ENCODE measurements at regions of chr6 and their contacts with region 1.

Region 1: GRCh38 chr6:34994693-34995092 is 105.6 kb downstream of the ANKS1A start:
- DNase-seq: no peak
- ATAC-seq: no peak
- H3K4me3 ChIP-seq: no peak overlapping the region
- H3K27ac ChIP-seq: no peak overlapping the region
- H3K4me1 ChIP-seq: no peaks in the 10 kb centered on the region
- H3K27me3 ChIP-seq: no peaks in the 10 kb centered on the region
- CTCF ChIP-seq: no peak
- POLR2A ChIP-seq: no peak

Region 2: GRCh38 chr6:34876472-34876871 is 118.2 kb before region 1 on chr6:
- intact Hi-C with region 1: no loop called
- DNase-seq: no peak
- ATAC-seq: no peak
- H3K4me3 ChIP-seq: no peak overlapping the region
- H3K27ac ChIP-seq: no peak overlapping the region
- H3K4me1 ChIP-seq: no peaks in the 10 kb centered on the region
- H3K27me3 ChIP-seq: no peaks in the 10 kb centered on the region
- CTCF ChIP-seq: no peak
- POLR2A ChIP-seq: no peak

Region 3: DNA sequence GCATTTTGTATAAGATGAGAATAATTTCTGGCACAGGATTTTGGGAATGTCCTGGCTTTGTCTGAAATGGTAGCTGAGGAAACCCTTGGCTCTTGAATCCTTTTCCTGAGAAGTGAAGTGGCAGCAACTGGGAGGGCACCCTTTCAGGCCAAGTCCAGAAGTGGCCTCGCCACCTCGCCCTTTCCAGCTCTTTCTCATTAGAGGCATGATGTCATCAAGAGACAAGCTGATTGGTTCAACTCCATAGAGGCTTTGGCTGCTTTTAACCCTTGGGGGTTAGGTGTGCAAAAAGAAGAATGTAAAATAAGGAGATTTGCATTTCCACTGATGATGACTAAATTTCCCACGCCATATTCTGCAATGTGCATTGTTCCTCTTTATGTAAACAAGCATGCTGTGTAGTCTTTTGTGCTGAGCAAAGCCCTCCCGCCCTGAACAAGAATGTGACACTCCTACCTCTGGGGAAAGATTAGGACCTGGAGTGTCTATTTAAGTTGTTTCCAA is 29.9 kb after region 1 on chr6:
- intact Hi-C with region 1: no loop called
- DNase-seq: peak in 4 of 5 donors; percentile 66 to 79 (median 72)
- ATAC-seq: peak; percentile 85 to 91 (median 89)
- H3K4me3 ChIP-seq: peak overlapping the region in 4 of 12 donors; percentile 8 to 17 (median 9)
- H3K27ac ChIP-seq: peak overlapping the region; percentile 28 to 95 (median 78)
- H3K4me1 ChIP-seq: peaks cover 21 to 99% (median 86%) of the 10 kb centered on the region in 12 donors
- H3K27me3 ChIP-seq: no peaks in the 10 kb centered on the region
- CTCF ChIP-seq: no peak
- POLR2A ChIP-seq: no peak

Region 4: GRCh38 chr6:35064757-35065440 is 70.2 kb after region 1 on chr6:
- intact Hi-C with region 1: loop called in 3 of 10 experiments (anchors 5 kb)
- DNase-seq: no peak
- ATAC-seq: peak in 3 of 4 donors; percentile 6 to 23 (median 6)
- H3K4me3 ChIP-seq: no peak overlapping the region
- H3K27ac ChIP-seq: peak overlapping the region in 11 of 12 donors; percentile 38 to 84 (median 76)
- H3K4me1 ChIP-seq: peaks cover 0 to 55% (median 24%) of the 10 kb centered on the region in 12 donors
- H3K27me3 ChIP-seq: no peaks in the 10 kb centered on the region
- CTCF ChIP-seq: peak in 1 of 12 donors; percentile 11
- POLR2A ChIP-seq: no peak

Region 5: GRCh38 chr6:35081426-35081851 is 86.7 kb after region 1 on chr6:
- intact Hi-C with region 1: no loop called
- DNase-seq: peak in 3 of 5 donors; percentile 11 to 26 (median 19)
- ATAC-seq: peak in 2 of 4 donors; percentile 9 to 18
- H3K4me3 ChIP-seq: no peak overlapping the region
- H3K27ac ChIP-seq: peak overlapping the region in 11 of 12 donors; percentile 18 to 64 (median 56)
- H3K4me1 ChIP-seq: peaks cover 0 to 23% (median 13%) of the 10 kb centered on the region in 12 donors
- H3K27me3 ChIP-seq: no peaks in the 10 kb centered on the region
- CTCF ChIP-seq: no peak
- POLR2A ChIP-seq: no peak

Measured in heart left ventricle (tissue), 16 donors.